ENCODE measurements at regions of chr11 and their contacts with region 1.

Region 1: GRCh38 chr11:57249384-57250319 is 12.6 kb upstream of the APLNR start:
- DNase-seq: peak; percentile 60
- ATAC-seq: peak; percentile 53
- H3K4me3 Mint-ChIP-seq: no peak overlapping the region
- H3K27ac Mint-ChIP-seq: no peak overlapping the region
- H3K4me1 Mint-ChIP-seq: peaks cover 5% of the 10 kb centered on the region
- H3K27me3 Mint-ChIP-seq: peaks cover 22% of the 10 kb centered on the region

Region 2: DNA sequence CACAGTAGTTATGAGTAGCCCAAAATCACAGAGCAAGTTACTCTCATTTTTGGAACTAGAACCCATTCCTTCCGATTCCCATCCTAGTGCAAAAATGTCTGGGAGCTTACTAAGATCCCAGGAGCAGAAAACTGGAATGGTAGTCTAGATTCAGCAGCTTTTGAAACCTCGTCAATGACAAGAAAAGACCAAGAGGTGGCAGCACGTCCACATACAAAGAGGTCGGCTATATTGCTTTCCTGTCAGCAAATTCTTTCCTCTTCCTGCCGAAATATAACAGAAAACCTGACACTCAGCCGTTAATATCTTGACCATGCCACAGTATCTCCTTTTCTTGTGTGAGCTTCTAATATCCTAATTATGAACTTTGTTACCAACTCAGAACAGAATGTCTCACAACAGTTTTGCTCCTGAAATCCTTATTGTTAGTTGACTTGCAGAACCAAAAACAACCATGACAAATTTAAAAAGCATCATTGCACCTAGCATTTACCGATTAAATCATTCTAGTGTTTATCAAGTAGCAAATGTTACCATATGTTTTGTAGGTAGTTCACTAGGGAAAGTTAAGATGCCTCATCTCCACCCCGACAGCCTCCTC is 408.3 kb before region 1 on chr11:
- CTCF ChIA-PET with region 1: interaction called, 48 read pairs
- DNase-seq: peak; percentile 45
- ATAC-seq: no peak
- H3K4me3 Mint-ChIP-seq: no peak overlapping the region
- H3K27ac Mint-ChIP-seq: no peak overlapping the region
- H3K4me1 Mint-ChIP-seq: no peaks in the 10 kb centered on the region
- H3K27me3 Mint-ChIP-seq: no peaks in the 10 kb centered on the region

Region 3: DNA sequence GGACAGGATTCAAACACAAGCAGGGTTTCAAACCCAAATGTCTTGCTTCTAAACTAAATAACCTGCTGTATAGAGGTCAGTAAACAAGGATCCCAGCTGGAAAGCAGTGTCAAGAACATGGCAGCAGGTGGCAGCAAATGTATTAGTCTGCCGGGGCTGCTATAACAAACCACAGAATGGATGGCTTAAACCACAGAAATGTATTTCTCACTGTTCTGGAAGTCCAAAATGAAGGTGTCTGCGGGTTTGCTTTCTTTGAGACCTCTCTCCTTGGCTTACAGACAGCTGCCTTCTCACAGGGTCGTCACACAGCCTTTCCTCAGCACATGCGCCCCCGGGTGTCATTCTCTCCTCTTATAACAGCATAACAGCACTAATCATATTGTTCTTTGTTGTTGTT is 133.0 kb before region 1 on chr11:
- CTCF ChIA-PET with region 1: interaction called, 36 read pairs
- DNase-seq: no peak
- ATAC-seq: no peak
- H3K4me3 Mint-ChIP-seq: no peak overlapping the region
- H3K27ac Mint-ChIP-seq: no peak overlapping the region
- H3K4me1 Mint-ChIP-seq: no peaks in the 10 kb centered on the region
- H3K27me3 Mint-ChIP-seq: no peaks in the 10 kb centered on the region

Region 4: DNA sequence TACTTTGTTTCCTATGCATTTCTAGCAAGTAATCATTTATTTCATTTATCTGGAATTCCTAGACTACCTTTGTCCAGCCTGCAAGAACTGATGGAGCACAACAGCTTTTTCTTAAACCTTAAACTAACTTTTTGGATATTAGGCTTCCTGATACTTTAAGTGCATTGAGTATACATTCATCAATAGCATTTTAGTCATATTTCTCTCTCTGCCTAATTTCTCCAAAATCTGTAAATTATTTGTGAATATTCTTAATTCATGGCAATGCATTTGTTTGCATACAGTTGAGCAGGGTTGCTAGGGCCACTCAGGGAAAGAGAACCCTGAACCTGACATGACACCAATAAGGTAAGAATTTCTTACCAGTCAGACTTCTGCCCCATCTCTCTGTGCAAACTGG is 16.5 kb after region 1 on chr11:
- CTCF ChIA-PET with region 1: interaction called, 14 read pairs
- DNase-seq: no peak
- ATAC-seq: no peak
- H3K4me3 Mint-ChIP-seq: no peak overlapping the region
- H3K27ac Mint-ChIP-seq: no peak overlapping the region
- H3K4me1 Mint-ChIP-seq: no peaks in the 10 kb centered on the region
- H3K27me3 Mint-ChIP-seq: peaks cover 2% of the 10 kb centered on the region

Region 5: DNA sequence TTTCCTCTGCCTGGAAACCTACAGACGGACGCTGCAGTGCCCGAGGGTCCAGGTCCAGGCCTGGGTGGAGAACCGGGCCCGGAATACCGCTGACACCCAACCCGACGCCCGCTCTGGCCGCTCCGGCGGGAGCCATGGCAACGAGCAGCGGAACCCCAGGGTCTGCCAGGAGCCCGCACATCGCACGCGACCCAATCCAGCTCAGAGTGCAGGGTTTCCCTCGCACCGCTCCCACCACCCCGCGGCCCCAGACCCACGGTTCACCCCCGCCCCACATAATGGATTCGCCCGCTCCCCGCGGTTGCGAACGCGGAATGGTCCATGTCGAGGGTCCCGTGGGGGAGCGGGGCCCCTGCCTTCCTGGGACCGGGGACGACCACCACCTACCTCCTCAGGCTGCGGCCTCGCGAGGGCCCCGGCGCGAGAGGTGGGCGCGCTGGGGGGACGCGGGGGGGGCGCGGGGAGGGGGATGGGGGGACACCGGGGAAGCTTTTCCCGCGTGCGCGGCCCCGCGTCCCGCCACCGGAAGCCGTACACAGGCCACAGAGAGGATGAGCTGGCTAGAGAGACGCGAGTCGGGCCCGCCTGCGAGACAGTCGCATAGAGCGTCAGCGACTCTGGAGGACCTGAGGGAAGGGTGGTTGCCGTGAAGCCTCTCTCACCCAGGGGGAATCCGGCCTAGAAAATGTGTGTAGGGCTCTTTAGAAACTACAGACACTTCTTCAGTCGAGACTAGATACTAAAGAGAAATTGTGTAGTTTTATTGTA is 85.9 kb after region 1 on chr11 and contains the start of gene SSRP1:
- CTCF ChIA-PET with region 1: no interaction called
- DNase-seq: peak; percentile 93
- ATAC-seq: peak; percentile 98
- H3K4me3 Mint-ChIP-seq: peak within 1 kb of the TSS; percentile 94
- H3K27ac Mint-ChIP-seq: peak within 1 kb of the TSS; percentile 92
- H3K4me1 Mint-ChIP-seq: peaks cover 41% of the 10 kb centered on the region
- H3K27me3 Mint-ChIP-seq: peaks cover 5% of the 10 kb centered on the region
- total RNA-seq, gene SSRP1: 158 to 196 TPM